HEK293T (cell line): ENCODE measurements at regions of chr10 and their contacts with region 1.

Region 1: GRCh38 chr10:110610308-110610774 is 33.8 kb upstream of the RBM20 start:
- DNase-seq: peak; percentile 76

Region 2: GRCh38 chr10:110643653-110644597 is 33.6 kb after region 1 on chr10 and contains the start of gene RBM20:
- CTCF ChIA-PET with region 1: no interaction called
- POLR2A ChIA-PET with region 1: no interaction called
- DNase-seq: peak; percentile 63

Region 3: DNA sequence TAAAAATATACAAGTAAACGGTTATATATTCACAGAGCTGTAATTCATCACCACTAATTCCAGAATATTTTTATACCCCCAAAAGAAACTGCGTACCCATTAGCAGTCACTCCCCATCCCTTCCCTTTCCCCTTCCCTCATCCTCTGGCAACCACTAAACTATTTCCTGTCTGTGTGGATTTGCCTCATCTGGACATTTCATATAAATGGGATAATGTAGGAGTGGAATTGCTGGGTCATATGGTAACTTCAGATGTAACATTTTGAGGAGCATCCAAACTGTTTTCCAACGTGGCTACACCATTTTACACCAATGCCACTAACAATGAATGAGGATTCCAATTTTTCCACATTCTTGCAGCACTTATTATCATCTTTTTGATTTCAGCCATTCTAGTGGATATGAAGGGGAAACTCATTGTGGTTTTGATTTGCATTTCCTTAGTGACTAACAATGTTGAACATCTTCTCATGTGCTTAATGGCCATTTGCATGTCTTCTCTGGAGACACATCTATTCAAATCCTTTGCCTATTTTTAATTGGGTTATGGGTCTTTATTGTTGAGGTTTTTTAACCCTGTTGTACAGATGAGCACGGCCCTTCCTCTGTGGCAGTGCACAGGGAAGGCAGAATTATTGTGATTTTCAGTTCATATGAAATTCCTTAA is 113.0 kb after region 1 on chr10:
- CTCF ChIA-PET with region 1: interaction called, 12 read pairs
- POLR2A ChIA-PET with region 1: no interaction called
- DNase-seq: no peak